Aorta (tissue), 5 donors: ENCODE measurements at regions of chr21 and their contacts with region 1.

Region 1: GRCh38 chr21:38574895-38575575 is 76.8 kb upstream of the ERG start:
- DNase-seq: no peak
- ATAC-seq: no peak
- H3K4me3 ChIP-seq: no peak overlapping the region
- H3K27ac ChIP-seq: no peak overlapping the region
- H3K4me1 ChIP-seq: peaks cover 0 to 2% of the 10 kb centered on the region in 2 donors
- H3K27me3 ChIP-seq: no peaks in the 10 kb centered on the region

Region 2: DNA sequence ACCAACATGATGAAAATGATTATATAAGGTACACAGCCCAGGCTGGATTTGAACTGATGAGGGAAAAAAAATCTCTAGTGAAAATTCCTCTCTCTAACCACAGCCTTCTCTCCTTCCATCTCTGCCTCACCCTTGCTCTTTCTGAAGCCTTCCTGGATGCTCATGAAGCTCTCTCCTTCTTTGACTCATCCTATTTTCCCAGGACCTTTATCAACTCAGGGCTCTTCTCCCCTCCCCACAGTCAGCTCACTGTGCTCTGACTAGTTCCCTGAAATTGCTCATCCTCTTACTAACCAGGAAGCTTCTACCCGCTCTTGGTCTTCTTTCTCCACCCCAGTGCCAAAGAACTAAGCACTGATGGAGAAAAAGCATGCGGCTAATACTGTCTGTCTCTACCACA is 30.4 kb before region 1 on chr21:
- intact Hi-C with region 1: loop called in 1 of 2 experiments (anchors 5 kb)
- DNase-seq: no peak
- ATAC-seq: no peak
- H3K4me3 ChIP-seq: no peak overlapping the region
- H3K27ac ChIP-seq: no peak overlapping the region
- H3K4me1 ChIP-seq: peaks cover 0 to 2% of the 10 kb centered on the region in 2 donors
- H3K27me3 ChIP-seq: no peaks in the 10 kb centered on the region